IMR-90 (cell line): ENCODE measurements at regions of chr10 and their contacts with region 1.

Region 1: GRCh38 chr10:100185364-100186252 is at the start of gene ERLIN1:
- DNase-seq: peak; percentile 87
- ATAC-seq: peak; percentile 94
- H3K4me3 ChIP-seq: peak within 1 kb of the TSS; percentile 54
- H3K27ac ChIP-seq: peak within 1 kb of the TSS; percentile 76
- H3K4me1 ChIP-seq: peaks cover 6% of the 10 kb centered on the region
- H3K27me3 ChIP-seq: no peaks in the 10 kb centered on the region
- CTCF ChIP-seq: no peak
- POLR2A ChIP-seq: peak; percentile 70
- RAD21 ChIP-seq: no peak
- total RNA-seq, gene ERLIN1: 33.9 and 35.8 TPM in 2 replicates

Region 2: GRCh38 chr10:99732033-99732912 is 453.3 kb before region 1 on chr10 and contains the starts of genes COX15 and CUTC:
- CTCF ChIA-PET with region 1: no interaction called
- POLR2A ChIA-PET with region 1: no interaction called
- dilution Hi-C with region 1: no loop called
- in situ Hi-C with region 1: no loop called
- intact Hi-C with region 1: loop called (anchors 10 kb)
- DNase-seq: peak; percentile 96
- ATAC-seq: peak; percentile 95
- H3K4me3 ChIP-seq: peak within 1 kb of the TSS; percentile 69
- H3K27ac ChIP-seq: peak within 1 kb of the TSS; percentile 96
- H3K4me1 ChIP-seq: peaks cover 2% of the 10 kb centered on the region; the same call in 1 of the 2 replicates
- H3K27me3 ChIP-seq: no peaks in the 10 kb centered on the region
- CTCF ChIP-seq: peak; percentile 25; the same call in 1 of the 2 replicates
- POLR2A ChIP-seq: peak; percentile 79
- RAD21 ChIP-seq: peak; percentile 30
- total RNA-seq, gene COX15: 40.1 and 41.1 TPM in 2 replicates
- total RNA-seq, gene CUTC: 7.0 and 17.2 TPM in 2 replicates

Region 3: GRCh38 chr10:99845837-99846382 is 339.7 kb before region 1 on chr10:
- CTCF ChIA-PET with region 1: no interaction called
- POLR2A ChIA-PET with region 1: no interaction called
- dilution Hi-C with region 1: no loop called
- in situ Hi-C with region 1: loop called (anchors 10 kb)
- intact Hi-C with region 1: no loop called
- DNase-seq: peak; percentile 94
- ATAC-seq: peak; percentile 94
- H3K4me3 ChIP-seq: no peak overlapping the region
- H3K27ac ChIP-seq: no peak overlapping the region
- H3K4me1 ChIP-seq: no peaks in the 10 kb centered on the region
- H3K27me3 ChIP-seq: no peaks in the 10 kb centered on the region
- CTCF ChIP-seq: peak; percentile 96
- POLR2A ChIP-seq: no peak
- RAD21 ChIP-seq: peak; percentile 93

Region 4: GRCh38 chr10:99854860-99855259 is 330.7 kb before region 1 on chr10:
- CTCF ChIA-PET with region 1: no interaction called
- POLR2A ChIA-PET with region 1: no interaction called
- dilution Hi-C with region 1: no loop called
- in situ Hi-C with region 1: no loop called
- intact Hi-C with region 1: loop called (anchors 2 kb)
- DNase-seq: peak; percentile 83
- ATAC-seq: peak; percentile 82
- H3K4me3 ChIP-seq: no peak overlapping the region
- H3K27ac ChIP-seq: no peak overlapping the region
- H3K4me1 ChIP-seq: no peaks in the 10 kb centered on the region; the same call in 1 of the 2 replicates
- H3K27me3 ChIP-seq: peaks cover 2% of the 10 kb centered on the region
- CTCF ChIP-seq: peak; percentile 77
- POLR2A ChIP-seq: no peak
- RAD21 ChIP-seq: peak; percentile 86

Region 5: GRCh38 chr10:99976886-99977665 is 208.5 kb before region 1 on chr10:
- CTCF ChIA-PET with region 1: no interaction called
- POLR2A ChIA-PET with region 1: no interaction called
- dilution Hi-C with region 1: no loop called
- in situ Hi-C with region 1: no loop called
- intact Hi-C with region 1: loop called (anchors 5 kb)
- DNase-seq: peak; percentile 92
- ATAC-seq: peak; percentile 94
- H3K4me3 ChIP-seq: no peak overlapping the region
- H3K27ac ChIP-seq: 0 out of 2 replicates have a peak overlapping the region, but pooled peaks have one; percentile 30
- H3K4me1 ChIP-seq: peaks cover 14% of the 10 kb centered on the region
- H3K27me3 ChIP-seq: no peaks in the 10 kb centered on the region
- CTCF ChIP-seq: no peak
- POLR2A ChIP-seq: no peak
- RAD21 ChIP-seq: 0 out of 2 replicates have a peak, but pooled peaks have one; percentile 17

Region 6: DNA sequence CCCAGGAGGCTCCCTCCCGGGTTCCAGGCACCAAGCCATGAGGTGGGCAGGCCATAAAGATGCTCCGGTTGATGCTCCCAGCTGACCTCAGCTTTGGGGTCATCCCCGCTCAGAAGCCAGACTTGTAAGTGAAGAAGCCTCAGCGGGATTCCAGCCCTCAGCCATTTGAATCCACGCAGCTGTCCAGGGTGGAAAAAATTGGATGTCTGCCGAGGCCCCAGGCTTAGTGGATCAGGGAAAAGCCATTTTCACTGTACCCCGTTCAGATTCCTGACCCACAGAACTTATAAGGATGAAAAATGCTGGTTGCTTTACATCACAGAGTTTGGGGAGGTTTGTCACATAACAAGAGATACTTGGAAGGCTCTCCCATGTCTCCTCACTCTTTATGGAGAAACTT is 54.8 kb before region 1 on chr10:
- CTCF ChIA-PET with region 1: no interaction called
- POLR2A ChIA-PET with region 1: no interaction called
- dilution Hi-C with region 1: no loop called
- in situ Hi-C with region 1: no loop called
- intact Hi-C with region 1: no loop called
- DNase-seq: no peak
- ATAC-seq: no peak
- H3K4me3 ChIP-seq: no peak overlapping the region
- H3K27ac ChIP-seq: no peak overlapping the region
- H3K4me1 ChIP-seq: no peaks in the 10 kb centered on the region
- H3K27me3 ChIP-seq: peaks cover 12% of the 10 kb centered on the region
- CTCF ChIP-seq: no peak
- POLR2A ChIP-seq: no peak
- RAD21 ChIP-seq: no peak